AG04449 (cell line): ENCODE measurements at regions of chr5 and their contacts with region 1.

Region 1: GRCh38 chr5:53170748-53171349 is 61.3 kb upstream of the MOCS2 start:
- DNase-seq: no peak
- H3K4me3 ChIP-seq: no peak overlapping the region
- CTCF ChIP-seq: peak; percentile 60

Region 2: GRCh38 chr5:53151713-53152458 is 19.0 kb before region 1 on chr5:
- CTCF ChIA-PET with region 1: interaction called, 10 read pairs
- POLR2A ChIA-PET with region 1: no interaction called
- DNase-seq: peak; percentile 75
- H3K4me3 ChIP-seq: no peak overlapping the region
- CTCF ChIP-seq: no peak

Region 3: GRCh38 chr5:53180991-53181390 is 10.1 kb after region 1 on chr5:
- CTCF ChIA-PET with region 1: interaction called, 22 read pairs
- POLR2A ChIA-PET with region 1: no interaction called
- DNase-seq: no peak
- H3K4me3 ChIP-seq: no peak overlapping the region
- CTCF ChIP-seq: no peak

Region 4: DNA sequence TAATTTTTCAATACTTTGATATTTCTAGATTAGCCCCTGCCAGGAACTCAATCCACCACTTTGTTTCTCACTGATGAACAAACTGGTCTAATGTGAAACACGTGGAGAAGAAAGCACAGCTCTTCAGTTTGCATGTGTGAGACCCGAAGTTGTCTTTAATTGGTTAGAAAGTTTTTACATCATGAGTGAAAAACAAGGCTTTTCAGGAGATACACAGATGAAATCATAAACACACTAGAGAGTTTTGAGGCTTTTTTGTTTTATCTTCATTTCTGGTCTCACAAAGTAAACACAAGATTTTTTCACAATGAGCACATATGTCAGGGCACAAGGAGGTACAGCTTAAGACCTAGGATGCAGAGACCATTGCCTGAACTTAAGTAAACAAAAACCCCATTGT is 23.2 kb after region 1 on chr5:
- CTCF ChIA-PET with region 1: interaction called, 11 read pairs
- POLR2A ChIA-PET with region 1: no interaction called
- DNase-seq: no peak
- H3K4me3 ChIP-seq: no peak overlapping the region
- CTCF ChIP-seq: no peak

Region 5: DNA sequence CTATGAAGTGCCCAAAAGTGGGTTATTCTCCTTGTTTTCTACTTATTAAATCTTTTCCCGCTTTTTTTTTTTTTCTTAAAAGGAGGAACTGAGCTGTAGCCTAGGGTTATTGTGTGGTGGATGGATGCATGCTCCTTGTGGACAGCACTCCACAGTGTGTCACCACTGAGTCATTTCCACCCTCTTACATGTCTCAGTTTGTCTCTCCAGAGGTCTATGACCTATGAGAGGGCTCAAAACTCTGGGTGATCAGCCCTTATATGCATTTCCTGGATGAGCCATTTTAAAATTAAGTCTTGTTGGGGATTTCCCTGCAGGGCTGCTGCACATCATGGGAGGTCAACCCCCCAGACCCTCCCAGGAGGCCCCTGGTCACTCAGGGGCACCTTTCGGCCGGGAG is 41.0 kb after region 1 on chr5:
- CTCF ChIA-PET with region 1: no interaction called
- POLR2A ChIA-PET with region 1: no interaction called
- DNase-seq: no peak
- H3K4me3 ChIP-seq: no peak overlapping the region
- CTCF ChIP-seq: no peak

Region 6: DNA sequence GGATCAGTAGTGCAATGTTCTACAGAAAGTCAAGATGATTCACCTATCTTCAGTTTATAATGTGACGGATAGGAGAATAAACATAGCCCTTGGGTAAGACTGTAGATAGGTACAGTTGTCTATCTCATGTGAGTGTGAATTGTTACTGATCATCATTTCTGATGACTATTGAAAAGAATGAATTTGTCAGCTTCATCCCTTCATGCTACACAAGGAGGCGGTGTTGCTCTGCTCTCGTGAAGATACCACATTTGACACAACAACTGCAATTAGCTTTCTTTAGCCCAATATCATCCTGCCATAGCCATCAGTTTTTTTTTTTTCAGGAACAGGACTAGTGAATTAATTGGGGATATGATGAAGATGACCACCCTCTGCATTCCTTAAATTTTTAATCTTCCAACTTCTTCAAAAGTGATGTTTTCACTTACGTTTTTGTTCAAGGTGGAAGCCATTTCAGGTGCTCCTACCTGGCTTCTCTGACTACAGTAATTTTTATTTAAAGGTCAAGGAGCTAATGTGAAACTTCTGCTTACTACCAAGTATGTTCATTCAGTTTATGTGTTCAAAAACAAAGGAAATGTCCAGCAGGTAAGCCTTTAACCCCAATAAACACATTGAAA is 91.6 kb after region 1 on chr5:
- CTCF ChIA-PET with region 1: interaction called, 16 read pairs
- POLR2A ChIA-PET with region 1: no interaction called
- DNase-seq: no peak
- H3K4me3 ChIP-seq: no peak overlapping the region
- CTCF ChIP-seq: peak; percentile 68

Region 7: DNA sequence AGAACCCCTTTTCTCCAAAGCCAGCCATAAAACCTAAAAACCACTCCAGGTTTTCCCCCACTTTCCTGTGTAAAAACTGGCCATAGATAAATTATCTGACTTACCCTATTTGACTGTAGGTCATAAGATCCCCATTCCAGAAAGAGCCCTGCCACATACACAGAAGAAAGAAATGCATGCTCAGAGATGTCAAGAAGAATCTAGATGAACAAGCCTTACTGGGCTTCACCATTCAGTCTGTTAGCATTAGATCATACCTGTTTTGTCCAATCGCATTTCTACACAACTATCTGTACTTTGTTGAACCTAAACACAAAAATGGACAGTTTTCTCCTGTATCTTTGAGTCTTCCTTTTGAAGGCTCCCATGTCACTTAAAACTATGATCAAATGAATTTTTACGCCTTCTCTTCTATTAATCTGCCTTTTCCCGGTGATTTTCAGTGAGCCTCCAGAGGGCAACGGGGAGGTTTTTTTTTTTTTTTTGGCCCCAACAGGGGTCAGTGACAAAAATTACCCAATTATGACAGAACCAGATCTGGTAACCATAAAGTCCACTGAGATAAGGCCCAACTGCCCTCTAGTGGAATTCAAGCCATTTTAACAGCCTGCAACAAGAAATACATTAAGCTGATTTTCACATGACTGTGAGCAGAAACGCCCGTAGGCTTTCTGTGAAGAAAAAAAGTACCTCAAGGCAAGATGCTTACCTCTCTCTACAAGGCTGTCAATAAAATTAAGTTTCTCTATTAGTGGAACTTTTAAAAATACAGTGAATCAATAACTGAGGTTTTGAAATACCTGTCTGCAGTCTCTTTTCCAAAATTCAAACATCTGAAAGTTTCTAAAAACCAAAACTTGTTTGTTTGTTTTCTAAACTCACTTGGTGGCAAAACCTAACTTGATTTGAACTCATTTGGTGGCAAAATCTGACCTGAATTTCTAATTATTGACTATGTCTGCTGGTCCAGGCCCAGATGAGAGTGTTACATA is 259.7 kb after region 1 on chr5:
- CTCF ChIA-PET with region 1: interaction called, 15 read pairs
- POLR2A ChIA-PET with region 1: no interaction called
- DNase-seq: no peak
- H3K4me3 ChIP-seq: no peak overlapping the region
- CTCF ChIP-seq: peak; percentile 50

Region 8: GRCh38 chr5:54234304-54234933 is 1063.6 kb after region 1 on chr5:
- CTCF ChIA-PET with region 1: interaction called, 60 read pairs
- POLR2A ChIA-PET with region 1: no interaction called
- DNase-seq: peak; percentile 29
- H3K4me3 ChIP-seq: no peak overlapping the region
- CTCF ChIP-seq: peak; percentile 42